Common myeloid progenitor, CD34-positive (primary cell): ENCODE measurements at regions of chr1 and their contacts with region 1.

Region 1: GRCh38 chr1:15075817-15076216 is 77.7 kb upstream of the TMEM51 start:
- DNase-seq: peak; percentile 51 to 95 (median 93)
- H3K4me3 ChIP-seq: no peak overlapping the region
- H3K27ac ChIP-seq: no peak overlapping the region
- H3K4me1 ChIP-seq: peaks cover 3 to 18% (median 14%) of the 10 kb centered on the region in 4 experiments
- H3K27me3 ChIP-seq: no peaks in the 10 kb centered on the region

Region 2: GRCh38 chr1:15046487-15047165 is 29.2 kb before region 1 on chr1:
- CTCF ChIA-PET with region 1: no interaction called
- POLR2A ChIA-PET with region 1: no interaction called
- DNase-seq: peak; percentile 65 to 80 (median 75)
- H3K4me3 ChIP-seq: no peak overlapping the region
- H3K27ac ChIP-seq: no peak overlapping the region
- H3K4me1 ChIP-seq: no peaks in the 10 kb centered on the region
- H3K27me3 ChIP-seq: no peaks in the 10 kb centered on the region

Region 3: DNA sequence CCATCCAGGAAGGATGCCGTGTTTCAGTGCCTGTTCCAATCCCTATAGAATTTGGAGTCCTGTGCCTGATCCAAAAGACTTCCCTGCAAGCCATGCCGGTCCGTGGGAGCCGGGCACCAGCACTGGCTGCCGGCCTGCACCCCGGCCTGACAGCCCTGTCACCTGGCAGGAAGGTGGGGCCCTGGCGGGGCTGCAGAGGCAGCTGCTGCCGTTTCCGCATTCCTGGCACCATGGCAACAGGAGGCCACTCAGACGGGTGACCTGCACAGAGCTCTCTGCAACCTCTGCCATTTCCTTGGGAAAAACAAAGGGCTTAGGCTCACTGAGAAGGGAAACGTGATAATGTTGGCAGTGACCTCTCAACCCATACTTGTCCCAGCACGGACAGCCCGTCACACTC is 14.6 kb after region 1 on chr1:
- CTCF ChIA-PET with region 1: interaction called, 6 read pairs
- POLR2A ChIA-PET with region 1: interaction called, 10 read pairs
- DNase-seq: peak; percentile 45 to 82 (median 75)
- H3K4me3 ChIP-seq: peak overlapping the region in 3 of 7 experiments; percentile 28 to 54 (median 41)
- H3K27ac ChIP-seq: peak overlapping the region in 1 of 2 experiments; percentile 61
- H3K4me1 ChIP-seq: peaks cover 4 to 25% (median 19%) of the 10 kb centered on the region in 4 experiments
- H3K27me3 ChIP-seq: no peaks in the 10 kb centered on the region

Region 4: GRCh38 chr1:15246960-15247614 is 171.3 kb after region 1 on chr1 and contains the start of gene FHAD1:
- CTCF ChIA-PET with region 1: no interaction called
- POLR2A ChIA-PET with region 1: no interaction called
- DNase-seq: peak; percentile 56 to 75 (median 66)
- H3K4me3 ChIP-seq: peak within 1 kb of the TSS in 5 of 7 experiments; percentile 8 to 58 (median 42)
- H3K27ac ChIP-seq: no peak within 1 kb of the TSS
- H3K4me1 ChIP-seq: peaks cover 5 to 39% (median 35%) of the 10 kb centered on the region in 4 experiments
- H3K27me3 ChIP-seq: peaks cover 0 to 13% (median 4%) of the 10 kb centered on the region in 5 experiments